ENCODE measurements at regions of chr5 and their contacts with region 1.

Region 1: DNA sequence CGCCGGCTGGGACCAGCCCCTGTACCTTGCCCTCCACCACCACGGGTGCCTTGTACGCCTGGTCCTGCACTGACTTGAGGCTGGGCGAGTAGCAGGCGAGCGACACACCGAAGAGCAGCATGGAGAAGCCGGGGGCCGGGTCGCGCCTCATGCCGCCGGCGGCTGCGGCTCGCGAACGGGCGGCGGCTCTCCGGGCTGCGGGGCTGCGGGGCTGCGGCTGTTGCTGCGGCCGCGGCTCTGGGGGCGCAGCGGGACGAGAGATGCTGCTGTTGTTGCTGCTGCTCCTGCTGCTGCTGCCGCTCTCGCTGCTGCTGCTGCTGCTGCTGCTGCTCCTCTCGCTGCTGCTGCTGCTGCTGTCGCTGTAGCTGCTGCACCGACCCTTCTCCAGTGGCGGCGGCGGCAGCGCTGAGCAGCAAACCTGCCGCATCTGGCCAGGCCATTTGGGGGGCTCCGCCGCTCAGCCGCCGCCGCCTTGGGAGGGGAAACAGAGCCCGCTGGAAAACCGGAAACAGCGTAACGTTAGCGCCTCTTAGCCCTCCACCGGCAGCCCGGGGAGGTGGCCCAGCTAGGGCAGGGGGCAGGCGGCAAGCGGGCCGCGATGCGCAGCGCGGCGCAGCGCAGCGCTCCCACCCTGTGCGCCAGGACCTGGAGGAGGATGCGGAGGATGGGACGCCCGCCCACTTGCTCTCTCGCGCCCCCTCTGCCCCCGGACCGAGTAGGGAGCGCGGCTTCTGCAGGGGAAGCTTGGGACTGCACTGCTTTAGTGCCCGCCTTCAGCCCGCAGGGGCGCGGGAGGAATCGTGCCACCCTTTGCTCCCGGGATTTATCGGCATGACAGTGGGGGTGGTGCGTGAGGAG is at the start of gene NRG2:
- DNase-seq: no peak
- ATAC-seq: peak; percentile 82
- H3K4me3 ChIP-seq: peak within 1 kb of the TSS; percentile 89
- H3K27ac ChIP-seq: peak within 1 kb of the TSS; percentile 46
- H3K4me1 ChIP-seq: peaks cover 13% of the 10 kb centered on the region; the same call in 1 of the 2 replicates
- H3K27me3 ChIP-seq: no peaks in the 10 kb centered on the region
- CTCF ChIP-seq: peak; percentile 55 to 78 (median 76)
- EP300 ChIP-seq: no peak
- POLR2A ChIP-seq: peak; percentile 48
- RAD21 ChIP-seq: peak; percentile 17; the same call in 1 of the 2 replicates
- polyA plus RNA-seq, gene NRG2: 0.10 to 0.15 TPM

Region 2: GRCh38 chr5:139872052-139872766 is 170.7 kb before region 1 on chr5:
- CTCF ChIA-PET with region 1: no interaction called
- POLR2A ChIA-PET with region 1: no interaction called
- RAD21 ChIA-PET with region 1: no interaction called
- SMC1A ChIA-PET with region 1: no interaction called
- in situ Hi-C with region 1: no loop called
- intact Hi-C with region 1: loop called (anchors 10 kb)
- DNase-seq: no peak
- ATAC-seq: peak; percentile 28; the same call in 1 of the 3 replicates
- H3K4me3 ChIP-seq: no peak overlapping the region
- H3K27ac ChIP-seq: no peak overlapping the region
- H3K4me1 ChIP-seq: no peaks in the 10 kb centered on the region
- H3K27me3 ChIP-seq: no peaks in the 10 kb centered on the region
- CTCF ChIP-seq: peak; percentile 20 to 27 (median 21); a peak in 3 of 6 replicates
- EP300 ChIP-seq: no peak
- POLR2A ChIP-seq: no peak
- RAD21 ChIP-seq: peak; percentile 30

Region 3: GRCh38 chr5:140005145-140005591 is 37.7 kb before region 1 on chr5:
- CTCF ChIA-PET with region 1: interaction called, 14 read pairs
- POLR2A ChIA-PET with region 1: interaction called, 21 read pairs
- RAD21 ChIA-PET with region 1: interaction called, 204 read pairs
- SMC1A ChIA-PET with region 1: interaction called, 394 read pairs
- in situ Hi-C with region 1: no loop called
- intact Hi-C with region 1: loop called (anchors 2 kb)
- DNase-seq: peak; percentile 96
- ATAC-seq: peak; percentile 98
- H3K4me3 ChIP-seq: no peak overlapping the region
- H3K27ac ChIP-seq: peak overlapping the region; percentile 49
- H3K4me1 ChIP-seq: peaks cover 26% of the 10 kb centered on the region
- H3K27me3 ChIP-seq: no peaks in the 10 kb centered on the region
- CTCF ChIP-seq: no peak
- EP300 ChIP-seq: peak; percentile 35 to 64; a peak in 2 of 4 replicates
- POLR2A ChIP-seq: peak; percentile 66
- RAD21 ChIP-seq: no peak

Region 4: GRCh38 chr5:140011297-140011802 is 31.5 kb before region 1 on chr5:
- CTCF ChIA-PET with region 1: interaction called, 8 read pairs
- POLR2A ChIA-PET with region 1: interaction called, 13 read pairs
- RAD21 ChIA-PET with region 1: interaction called, 204 read pairs
- SMC1A ChIA-PET with region 1: interaction called, 394 read pairs
- in situ Hi-C with region 1: no loop called
- intact Hi-C with region 1: no loop called
- DNase-seq: peak; percentile 83
- ATAC-seq: peak; percentile 95
- H3K4me3 ChIP-seq: no peak overlapping the region
- H3K27ac ChIP-seq: peak overlapping the region; percentile 63
- H3K4me1 ChIP-seq: peaks cover 17% of the 10 kb centered on the region
- H3K27me3 ChIP-seq: no peaks in the 10 kb centered on the region
- CTCF ChIP-seq: no peak
- EP300 ChIP-seq: peak; percentile 72 to 83
- POLR2A ChIP-seq: 0 out of 2 replicates have a peak, but pooled peaks have one; percentile 23
- RAD21 ChIP-seq: no peak; the same call in 1 of the 2 replicates

Region 5: DNA sequence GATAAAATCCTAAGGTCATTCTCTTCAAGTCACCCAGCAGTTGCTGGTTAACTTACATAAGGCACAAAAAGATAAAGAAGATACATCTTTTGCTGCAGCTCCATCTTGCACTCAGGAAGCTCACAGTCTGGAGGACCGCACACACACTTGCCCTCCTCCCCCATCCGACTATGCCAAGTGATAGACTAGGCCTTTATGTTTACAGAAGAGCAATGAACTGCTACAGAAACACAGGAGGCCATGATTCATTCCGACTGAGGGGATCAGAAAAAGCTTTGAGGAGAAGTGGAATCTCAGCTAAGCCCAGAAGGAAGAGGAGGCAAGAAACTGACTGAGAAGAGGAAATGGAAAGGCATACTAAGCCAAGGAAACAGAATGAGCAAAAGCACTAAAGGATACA is 17.1 kb before region 1 on chr5:
- CTCF ChIA-PET with region 1: interaction called, 6 read pairs
- POLR2A ChIA-PET with region 1: interaction called, 14 read pairs
- RAD21 ChIA-PET with region 1: interaction called, 12 read pairs
- SMC1A ChIA-PET with region 1: interaction called, 394 read pairs
- in situ Hi-C with region 1: no loop called
- intact Hi-C with region 1: no loop called
- DNase-seq: no peak
- ATAC-seq: no peak
- H3K4me3 ChIP-seq: no peak overlapping the region
- H3K27ac ChIP-seq: no peak overlapping the region
- H3K4me1 ChIP-seq: no peaks in the 10 kb centered on the region
- H3K27me3 ChIP-seq: no peaks in the 10 kb centered on the region
- CTCF ChIP-seq: no peak
- EP300 ChIP-seq: no peak
- POLR2A ChIP-seq: no peak
- RAD21 ChIP-seq: no peak

Region 6: DNA sequence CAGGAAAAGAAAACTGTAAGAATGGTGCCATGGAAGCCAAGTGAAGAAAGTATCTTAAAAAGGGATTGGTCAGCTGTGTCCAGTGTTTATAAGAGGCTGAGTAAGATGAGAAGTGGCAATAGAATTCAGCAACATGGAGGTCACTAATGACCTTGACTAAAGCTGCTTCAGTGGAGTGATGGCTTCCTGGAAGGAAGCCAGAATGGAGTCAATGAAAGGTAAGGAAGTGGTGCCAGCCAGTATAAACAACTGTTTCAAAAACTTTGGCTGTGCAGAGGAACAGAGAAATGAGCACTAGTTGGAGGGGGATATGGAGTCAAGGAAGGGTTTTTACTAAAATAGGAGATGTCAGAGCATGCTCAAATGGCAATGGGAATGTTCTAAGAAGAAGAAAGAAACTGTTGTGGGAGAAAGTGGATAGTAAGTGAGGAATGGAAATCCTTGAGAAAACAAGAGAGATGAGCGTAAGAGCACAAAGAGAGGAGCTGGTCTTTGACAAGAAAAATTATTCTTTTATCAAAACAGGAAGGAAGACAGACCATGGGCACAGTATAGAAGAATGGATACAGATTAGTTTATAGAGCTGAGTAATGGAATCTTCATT is 11.3 kb after region 1 on chr5:
- CTCF ChIA-PET with region 1: interaction called, 30 read pairs
- POLR2A ChIA-PET with region 1: interaction called, 3 read pairs
- RAD21 ChIA-PET with region 1: interaction called, 7 read pairs
- SMC1A ChIA-PET with region 1: interaction called, 4 read pairs
- in situ Hi-C with region 1: no loop called
- intact Hi-C with region 1: no loop called
- DNase-seq: no peak
- ATAC-seq: no peak
- H3K4me3 ChIP-seq: no peak overlapping the region
- H3K27ac ChIP-seq: no peak overlapping the region
- H3K4me1 ChIP-seq: peaks cover 7% of the 10 kb centered on the region
- H3K27me3 ChIP-seq: no peaks in the 10 kb centered on the region
- CTCF ChIP-seq: no peak
- EP300 ChIP-seq: no peak
- POLR2A ChIP-seq: no peak
- RAD21 ChIP-seq: no peak

Region 7: DNA sequence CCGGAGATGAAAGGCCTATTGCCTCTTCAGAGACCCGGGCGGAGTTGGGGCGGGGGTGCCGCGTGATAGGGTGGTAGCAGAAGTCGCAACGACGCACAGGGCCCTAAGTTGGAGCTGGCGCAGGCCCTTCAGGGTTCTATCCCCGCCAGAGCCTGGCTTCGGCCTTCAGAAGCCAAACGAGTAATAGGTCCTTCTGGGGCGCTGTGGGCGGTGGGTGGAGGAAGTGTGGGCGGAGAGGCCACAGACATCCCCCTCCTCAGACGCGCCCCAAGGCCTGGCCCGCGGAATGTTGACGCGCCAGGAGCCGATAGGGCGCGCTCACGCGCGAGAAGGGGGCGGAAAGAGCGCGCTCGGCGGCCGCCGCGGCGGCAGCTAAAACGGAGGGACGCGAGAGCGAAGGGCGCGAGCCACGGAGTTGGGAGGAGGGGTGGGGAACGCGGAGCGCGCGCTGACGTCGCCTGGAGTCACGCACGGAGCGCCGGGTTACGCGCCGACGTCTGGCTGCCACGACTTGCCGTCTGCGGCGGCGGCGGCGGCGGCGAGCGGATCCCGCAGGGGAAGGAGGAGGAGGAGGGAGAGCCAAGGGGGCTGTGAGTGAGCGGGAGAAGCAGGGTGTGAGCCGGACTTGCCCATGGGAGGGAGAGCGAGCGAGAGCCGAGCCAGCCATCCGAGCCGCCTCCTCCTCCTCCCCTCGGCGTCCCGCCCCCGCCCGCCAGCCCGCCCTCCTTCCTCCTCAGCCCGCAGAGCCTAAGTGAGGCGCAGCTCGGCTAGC is 64.6 kb after region 1 on chr5:
- CTCF ChIA-PET with region 1: no interaction called
- POLR2A ChIA-PET with region 1: interaction called, 5 read pairs
- RAD21 ChIA-PET with region 1: no interaction called
- SMC1A ChIA-PET with region 1: interaction called, 9 read pairs
- in situ Hi-C with region 1: no loop called
- intact Hi-C with region 1: loop called (anchors 5 kb)
- DNase-seq: peak; percentile 68
- ATAC-seq: peak; percentile 89
- H3K4me3 ChIP-seq: peak overlapping the region; percentile 86
- H3K27ac ChIP-seq: peak overlapping the region; percentile 67
- H3K4me1 ChIP-seq: peaks cover 20% of the 10 kb centered on the region
- H3K27me3 ChIP-seq: no peaks in the 10 kb centered on the region
- CTCF ChIP-seq: peak; percentile 6 to 29 (median 27); a peak in 3 of 6 replicates
- EP300 ChIP-seq: no peak
- POLR2A ChIP-seq: peak; percentile 86
- RAD21 ChIP-seq: no peak